Transverse colon (tissue), 4 donors: ENCODE measurements at regions of chr6 and their contacts with region 1.

Region 1: GRCh38 chr6:148128014-148128730 is 214.5 kb upstream of the SASH1 start:
- DNase-seq: no peak
- H3K4me3 ChIP-seq: no peak overlapping the region
- H3K27ac ChIP-seq: no peak overlapping the region
- H3K4me1 ChIP-seq: no peaks in the 10 kb centered on the region
- H3K27me3 ChIP-seq: no peaks in the 10 kb centered on the region
- CTCF ChIP-seq: no peak
- EP300 ChIP-seq: no peak
- POLR2A ChIP-seq: no peak

Region 2: GRCh38 chr6:148104131-148104530 is 24.0 kb before region 1 on chr6:
- in situ Hi-C with region 1: no loop called
- intact Hi-C with region 1: loop called (anchors 1 kb)
- DNase-seq: no peak
- H3K4me3 ChIP-seq: no peak overlapping the region
- H3K27ac ChIP-seq: no peak overlapping the region
- H3K4me1 ChIP-seq: no peaks in the 10 kb centered on the region
- H3K27me3 ChIP-seq: no peaks in the 10 kb centered on the region
- CTCF ChIP-seq: no peak
- EP300 ChIP-seq: no peak
- POLR2A ChIP-seq: no peak